HepG2 (cell line): ENCODE measurements at regions of chr10 and their contacts with region 1.

Region 1: DNA sequence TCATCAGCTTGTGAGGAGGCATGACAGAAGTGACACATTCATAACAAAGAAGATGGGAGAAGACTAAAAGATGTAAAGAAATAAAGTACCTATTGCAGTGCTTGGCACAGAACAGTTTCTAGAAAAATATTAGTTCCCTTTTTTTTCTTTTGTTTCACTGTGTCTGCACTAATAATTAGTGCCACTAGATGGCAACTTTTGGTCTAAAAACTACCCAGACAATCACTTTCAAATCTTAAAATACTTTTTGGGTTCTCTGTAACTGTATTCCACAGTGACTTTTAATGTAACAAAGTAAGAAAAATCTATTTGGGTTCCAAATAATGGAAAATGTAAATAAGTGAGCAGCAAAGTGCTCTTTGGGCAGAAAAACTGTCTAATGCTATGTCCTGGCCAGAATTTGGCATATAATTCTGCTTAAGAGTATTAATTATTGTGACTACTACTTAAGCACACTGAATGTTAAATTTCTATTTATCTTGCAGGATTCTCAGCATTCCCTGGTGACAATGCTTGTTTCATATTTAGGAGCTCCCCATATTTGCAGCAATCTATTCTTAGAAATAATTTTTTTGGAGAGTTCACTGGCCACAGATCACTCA is 134.8 kb upstream of the KIF5B start:
- DNase-seq: peak; percentile 25
- ATAC-seq: peak; percentile 26; the same call in 1 of the 3 replicates
- H3K4me3 ChIP-seq: no peak overlapping the region
- H3K27ac ChIP-seq: no peak overlapping the region
- H3K4me1 ChIP-seq: peaks cover 28% of the 10 kb centered on the region
- H3K27me3 ChIP-seq: no peaks in the 10 kb centered on the region
- CTCF ChIP-seq: peak; percentile 49
- EP300 ChIP-seq: no peak
- POLR2A ChIP-seq: no peak
- RAD21 ChIP-seq: no peak

Region 2: GRCh38 chr10:30722956-30723620 is 1467.9 kb before region 1 on chr10:
- CTCF ChIA-PET with region 1: no interaction called
- POLR2A ChIA-PET with region 1: no interaction called
- in situ Hi-C with region 1: no loop called
- intact Hi-C with region 1: loop called (anchors 10 kb)
- DNase-seq: no peak
- ATAC-seq: no peak
- H3K4me3 ChIP-seq: no peak overlapping the region
- H3K27ac ChIP-seq: no peak overlapping the region
- H3K4me1 ChIP-seq: peaks cover 25% of the 10 kb centered on the region
- H3K27me3 ChIP-seq: peaks cover 5 to 23% of the 10 kb centered on the region in 2 experiments; a peak in 2 of 5 replicates
- CTCF ChIP-seq: no peak
- EP300 ChIP-seq: no peak
- POLR2A ChIP-seq: no peak
- RAD21 ChIP-seq: no peak

Region 3: GRCh38 chr10:32125023-32125422 is 66.0 kb before region 1 on chr10:
- CTCF ChIA-PET with region 1: no interaction called
- POLR2A ChIA-PET with region 1: no interaction called
- in situ Hi-C with region 1: no loop called
- intact Hi-C with region 1: no loop called
- DNase-seq: peak; percentile 95
- ATAC-seq: peak; percentile 76
- H3K4me3 ChIP-seq: no peak overlapping the region
- H3K27ac ChIP-seq: peak overlapping the region; percentile 43
- H3K4me1 ChIP-seq: peaks cover 77% of the 10 kb centered on the region
- H3K27me3 ChIP-seq: no peaks in the 10 kb centered on the region
- CTCF ChIP-seq: no peak
- EP300 ChIP-seq: peak in 1 of 2 experiments; percentile 86; a peak in 2 of 4 replicates
- POLR2A ChIP-seq: no peak
- RAD21 ChIP-seq: no peak

Region 4: DNA sequence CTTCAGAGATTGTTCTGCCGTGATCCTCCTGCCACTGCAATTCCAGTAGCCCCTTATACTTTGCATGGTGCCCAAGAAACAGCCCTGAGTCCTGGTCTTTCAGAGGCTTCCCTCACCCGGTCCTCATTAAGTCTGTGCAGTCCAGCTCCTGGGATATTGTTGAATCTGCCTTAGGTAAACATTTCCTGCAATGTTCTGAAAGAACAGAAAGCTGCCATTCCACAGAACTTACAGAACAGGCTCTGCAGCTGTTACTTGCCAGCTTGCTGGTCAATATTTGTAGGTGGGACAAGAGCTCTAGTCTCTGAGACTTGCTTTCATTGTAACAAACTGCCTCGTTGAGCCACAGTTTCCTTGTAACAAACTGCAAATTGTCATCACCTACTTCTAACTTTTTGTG is 19.8 kb before region 1 on chr10:
- CTCF ChIA-PET with region 1: no interaction called
- POLR2A ChIA-PET with region 1: no interaction called
- in situ Hi-C with region 1: no loop called
- intact Hi-C with region 1: loop called (anchors 1 kb)
- DNase-seq: peak; percentile 64
- ATAC-seq: peak; percentile 82
- H3K4me3 ChIP-seq: no peak overlapping the region; a peak in 1 of 6 replicates
- H3K27ac ChIP-seq: no peak overlapping the region
- H3K4me1 ChIP-seq: peaks cover 53% of the 10 kb centered on the region
- H3K27me3 ChIP-seq: no peaks in the 10 kb centered on the region
- CTCF ChIP-seq: no peak
- EP300 ChIP-seq: no peak
- POLR2A ChIP-seq: no peak
- RAD21 ChIP-seq: no peak

Region 5: DNA sequence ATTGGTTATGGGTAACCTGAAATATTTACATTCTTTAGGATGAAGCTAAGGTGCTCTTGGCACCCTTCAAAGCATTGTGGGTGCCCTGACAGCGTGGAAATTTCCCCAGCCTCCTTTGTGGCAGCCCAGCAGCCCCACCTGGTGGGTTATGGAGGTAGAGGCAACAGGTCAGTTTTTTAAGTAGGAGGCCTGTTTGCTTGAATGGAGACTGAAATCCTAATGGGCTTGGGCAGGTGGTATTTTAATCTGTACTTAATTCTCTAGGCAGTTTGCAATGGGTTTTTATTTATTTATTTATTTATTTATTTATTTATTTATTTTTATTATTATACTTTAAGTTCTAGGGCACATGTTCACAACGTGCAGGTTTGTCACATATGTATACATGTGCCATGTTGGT is 16.6 kb after region 1 on chr10:
- CTCF ChIA-PET with region 1: interaction called, 11 read pairs
- POLR2A ChIA-PET with region 1: no interaction called
- in situ Hi-C with region 1: no loop called
- intact Hi-C with region 1: loop called (anchors 2 kb)
- DNase-seq: peak; percentile 59
- ATAC-seq: peak; percentile 81
- H3K4me3 ChIP-seq: peak overlapping the region in 1 of 3 experiments; percentile 20; a peak in 1 of 6 replicates
- H3K27ac ChIP-seq: no peak overlapping the region
- H3K4me1 ChIP-seq: peaks cover 35% of the 10 kb centered on the region
- H3K27me3 ChIP-seq: 0 out of 5 replicates have a peak, but pooled peaks cover 0 to 1% of the 10 kb centered on the region in 2 experiments
- CTCF ChIP-seq: peak; percentile 86
- EP300 ChIP-seq: no peak
- POLR2A ChIP-seq: no peak
- RAD21 ChIP-seq: peak; percentile 84

Region 6: DNA sequence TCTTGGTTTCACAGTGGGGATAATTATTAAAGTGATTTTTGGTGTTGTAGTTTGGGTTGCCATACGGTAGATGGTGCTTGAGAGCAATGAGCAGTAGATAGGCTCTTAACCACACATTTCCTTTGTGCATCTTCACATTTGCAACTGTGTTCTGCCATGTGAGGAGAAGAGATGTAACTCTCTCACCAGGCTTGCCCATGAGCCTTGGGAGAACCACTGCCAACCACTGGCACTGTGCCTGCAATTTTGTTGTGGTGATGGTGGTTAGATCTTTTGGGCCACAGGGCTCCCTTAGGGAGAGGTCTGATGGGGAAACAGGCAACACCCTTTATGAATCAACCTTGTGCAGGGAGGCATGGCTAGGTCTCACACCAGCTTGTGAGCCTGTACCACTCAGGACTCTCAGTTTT is 459.3 kb after region 1 on chr10:
- CTCF ChIA-PET with region 1: no interaction called
- POLR2A ChIA-PET with region 1: no interaction called
- in situ Hi-C with region 1: no loop called
- intact Hi-C with region 1: no loop called
- DNase-seq: no peak
- ATAC-seq: no peak
- H3K4me3 ChIP-seq: no peak overlapping the region
- H3K27ac ChIP-seq: no peak overlapping the region
- H3K4me1 ChIP-seq: no peaks in the 10 kb centered on the region
- H3K27me3 ChIP-seq: no peaks in the 10 kb centered on the region
- CTCF ChIP-seq: peak; percentile 25; the same call in 1 of the 2 replicates
- EP300 ChIP-seq: no peak
- POLR2A ChIP-seq: no peak
- RAD21 ChIP-seq: no peak